Caco-2 (cell line): ENCODE measurements at regions of chr5 and their contacts with region 1.

Region 1: DNA sequence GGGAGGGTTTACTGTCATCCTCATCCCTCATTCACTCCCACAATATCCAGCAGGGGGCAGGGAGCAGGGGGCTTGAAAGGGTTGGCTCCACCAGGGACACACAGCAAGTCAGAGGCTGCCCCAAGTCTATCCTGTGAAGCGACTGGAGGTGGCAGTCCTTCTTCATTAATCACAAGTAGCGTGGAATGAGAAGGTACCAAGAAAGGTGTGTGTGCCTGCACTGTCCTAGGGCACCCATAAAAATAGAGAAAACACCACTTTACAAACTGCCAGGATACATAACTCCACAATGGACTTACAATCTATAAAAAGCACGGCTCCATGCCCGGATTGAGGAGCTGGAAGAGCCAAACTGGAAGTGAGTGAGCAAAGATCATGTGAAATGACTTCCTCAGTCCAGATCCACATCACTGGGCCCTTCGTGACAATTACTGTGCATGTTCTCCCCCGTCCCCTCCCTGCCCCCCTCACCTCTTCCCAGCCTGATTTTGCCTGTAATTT is 183.9 kb downstream of the SLIT3 start:
- DNase-seq: peak; percentile 66 to 70
- H3K4me3 ChIP-seq: no peak overlapping the region
- H3K4me3 Mint-ChIP-seq: no peak overlapping the region
- H3K27ac Mint-ChIP-seq: no peak overlapping the region
- H3K4me1 ChIP-seq: no peaks in the 10 kb centered on the region
- H3K4me1 Mint-ChIP-seq: no peaks in the 10 kb centered on the region
- H3K27me3 ChIP-seq: no peaks in the 10 kb centered on the region
- H3K27me3 Mint-ChIP-seq: no peaks in the 10 kb centered on the region
- CTCF ChIP-seq: peak in 1 of 2 experiments; percentile 43

Region 2: DNA sequence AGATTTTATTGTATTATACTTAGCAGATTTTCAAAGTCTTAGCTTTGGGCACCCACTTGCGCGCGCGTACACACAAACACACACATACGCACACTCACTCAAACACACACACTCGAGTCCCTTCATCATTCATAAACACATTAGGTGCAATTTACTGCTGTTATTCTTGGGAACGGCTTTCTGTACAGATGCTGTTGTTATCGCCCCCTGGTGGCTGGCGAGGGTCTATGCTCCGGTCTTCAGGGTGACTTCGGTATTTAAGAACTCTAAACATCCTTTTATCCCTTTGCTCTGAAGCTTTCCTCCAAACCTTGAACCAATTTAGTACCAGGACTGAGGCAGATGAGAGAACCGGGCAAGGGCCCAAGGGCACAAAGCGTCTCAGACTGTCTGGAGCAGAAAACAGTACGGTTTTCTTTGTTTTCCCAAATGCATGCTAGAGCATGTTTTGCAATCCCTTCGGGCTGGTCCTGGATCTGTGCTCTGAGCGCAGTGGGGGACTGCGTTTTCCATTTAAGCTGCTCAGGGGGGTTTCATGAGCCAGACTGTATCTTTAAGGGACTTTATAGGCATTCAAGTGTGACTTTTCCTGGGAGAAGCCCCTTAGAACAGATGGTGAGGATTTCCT is 185.6 kb after region 1 on chr5:
- CTCF ChIA-PET with region 1: no interaction called
- POLR2A ChIA-PET with region 1: no interaction called
- intact Hi-C with region 1: loop called (anchors 1 kb)
- DNase-seq: peak; percentile 71 to 77
- H3K4me3 ChIP-seq: no peak overlapping the region
- H3K4me3 Mint-ChIP-seq: no peak overlapping the region
- H3K27ac Mint-ChIP-seq: peak overlapping the region; percentile 18
- H3K4me1 ChIP-seq: peaks cover 34% of the 10 kb centered on the region
- H3K4me1 Mint-ChIP-seq: peaks cover 45% of the 10 kb centered on the region
- H3K27me3 ChIP-seq: no peaks in the 10 kb centered on the region
- H3K27me3 Mint-ChIP-seq: no peaks in the 10 kb centered on the region
- CTCF ChIP-seq: peak; percentile 84 to 87

Region 3: DNA sequence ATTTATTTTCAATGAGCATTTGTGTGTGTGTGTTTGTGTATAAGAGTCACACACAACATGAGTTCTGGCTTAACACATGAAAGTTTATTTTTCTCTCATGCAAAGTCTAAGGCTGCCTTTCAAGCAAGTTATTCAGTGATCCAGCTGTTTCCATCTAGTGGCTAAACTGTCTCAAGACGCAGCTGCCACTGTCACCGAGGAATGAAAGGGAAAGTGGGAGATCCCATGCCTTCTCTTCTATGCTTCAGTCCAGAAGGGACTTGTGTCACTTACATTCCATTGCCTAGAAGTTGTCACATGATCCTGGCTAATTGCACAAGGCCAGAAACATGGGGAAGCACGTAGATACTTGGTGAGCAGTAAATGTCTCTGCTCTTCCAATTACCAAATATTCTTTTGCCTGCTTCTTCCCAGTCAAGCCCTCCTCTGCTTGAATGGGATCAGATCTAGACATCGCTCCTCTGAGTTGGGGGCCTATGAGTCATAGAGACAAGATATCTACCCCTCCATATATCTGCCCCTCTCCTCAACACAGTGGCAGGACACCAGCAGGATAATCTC is 214.4 kb after region 1 on chr5:
- CTCF ChIA-PET with region 1: no interaction called
- POLR2A ChIA-PET with region 1: no interaction called
- intact Hi-C with region 1: loop called (anchors 2 kb)
- DNase-seq: peak; percentile 55 to 60
- H3K4me3 ChIP-seq: no peak overlapping the region
- H3K4me3 Mint-ChIP-seq: no peak overlapping the region
- H3K27ac Mint-ChIP-seq: no peak overlapping the region
- H3K4me1 ChIP-seq: 0 out of 2 replicates have a peak, but pooled peaks cover 8% of the 10 kb centered on the region
- H3K4me1 Mint-ChIP-seq: no peaks in the 10 kb centered on the region
- H3K27me3 ChIP-seq: no peaks in the 10 kb centered on the region
- H3K27me3 Mint-ChIP-seq: no peaks in the 10 kb centered on the region
- CTCF ChIP-seq: peak; percentile 41 to 42

Region 4: GRCh38 chr5:169577951-169578350 is 460.9 kb after region 1 on chr5:
- CTCF ChIA-PET with region 1: no interaction called
- POLR2A ChIA-PET with region 1: no interaction called
- intact Hi-C with region 1: loop called (anchors 2 kb)
- DNase-seq: peak in 1 of 2 experiments; percentile 44
- H3K4me3 ChIP-seq: no peak overlapping the region
- H3K4me3 Mint-ChIP-seq: no peak overlapping the region
- H3K27ac Mint-ChIP-seq: no peak overlapping the region
- H3K4me1 ChIP-seq: peaks cover 9% of the 10 kb centered on the region
- H3K4me1 Mint-ChIP-seq: peaks cover 22% of the 10 kb centered on the region
- H3K27me3 ChIP-seq: no peaks in the 10 kb centered on the region
- H3K27me3 Mint-ChIP-seq: no peaks in the 10 kb centered on the region
- CTCF ChIP-seq: peak; percentile 57 to 70